ENCODE measurements at regions of chr19 and their contacts with region 1.

Region 1: GRCh38 chr19:6218491-6219162 is 61.1 kb downstream of the MLLT1 start:
- DNase-seq: peak; percentile 69 to 77 (median 72)
- H3K4me3 ChIP-seq: no peak overlapping the region
- H3K4me3 Mint-ChIP-seq: no peak overlapping the region
- H3K27ac ChIP-seq: no peak overlapping the region
- H3K27ac Mint-ChIP-seq: peak overlapping the region in 1 of 7 donors; percentile 17
- H3K4me1 ChIP-seq: no peaks in the 10 kb centered on the region
- H3K4me1 Mint-ChIP-seq: peaks cover 0 to 4% (median 2%) of the 10 kb centered on the region in 4 donors
- H3K27me3 ChIP-seq: no peaks in the 10 kb centered on the region
- H3K27me3 Mint-ChIP-seq: no peaks in the 10 kb centered on the region

Region 2: GRCh38 chr19:6238643-6239281 is 20.1 kb after region 1 on chr19:
- CTCF ChIA-PET with region 1: interaction called, 13 read pairs
- POLR2A ChIA-PET with region 1: no interaction called
- intact Hi-C with region 1: no loop called
- DNase-seq: peak in 1 of 5 donors; percentile 19
- H3K4me3 ChIP-seq: no peak overlapping the region
- H3K4me3 Mint-ChIP-seq: peak overlapping the region in 2 of 8 donors; percentile 21 to 25
- H3K27ac ChIP-seq: no peak overlapping the region
- H3K27ac Mint-ChIP-seq: peak overlapping the region in 3 of 7 donors; percentile 49 to 64 (median 55)
- H3K4me1 ChIP-seq: peaks cover 30% of the 10 kb centered on the region
- H3K4me1 Mint-ChIP-seq: peaks cover 17 to 59% (median 33%) of the 10 kb centered on the region in 4 donors
- H3K27me3 ChIP-seq: no peaks in the 10 kb centered on the region
- H3K27me3 Mint-ChIP-seq: no peaks in the 10 kb centered on the region

Region 3: DNA sequence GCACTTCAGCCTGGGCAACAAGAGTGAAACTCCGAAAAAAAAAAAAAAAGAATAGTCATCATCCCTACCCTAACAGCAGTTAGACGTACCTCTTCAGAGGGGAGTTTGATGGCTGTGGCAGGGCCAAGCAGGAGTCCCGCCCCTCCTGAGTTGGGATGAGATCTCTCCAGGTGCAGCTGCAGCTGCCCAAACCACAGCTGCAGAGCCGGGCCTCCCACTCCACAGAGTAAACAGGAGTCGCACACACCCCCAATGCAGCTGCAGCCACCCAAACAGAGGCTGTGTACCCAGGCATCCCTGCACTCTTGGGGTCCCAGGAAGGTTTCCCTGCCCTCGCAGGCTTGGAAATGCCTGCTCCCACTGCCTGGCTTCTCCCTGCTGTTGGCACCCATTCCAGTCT is 78.6 kb after region 1 on chr19:
- CTCF ChIA-PET with region 1: interaction called, 26 read pairs
- POLR2A ChIA-PET with region 1: no interaction called
- intact Hi-C with region 1: no loop called
- DNase-seq: no peak
- H3K4me3 ChIP-seq: no peak overlapping the region
- H3K4me3 Mint-ChIP-seq: no peak overlapping the region
- H3K27ac ChIP-seq: no peak overlapping the region
- H3K27ac Mint-ChIP-seq: no peak overlapping the region
- H3K4me1 ChIP-seq: no peaks in the 10 kb centered on the region
- H3K4me1 Mint-ChIP-seq: peaks cover 0 to 5% (median 2%) of the 10 kb centered on the region in 4 donors
- H3K27me3 ChIP-seq: no peaks in the 10 kb centered on the region
- H3K27me3 Mint-ChIP-seq: peaks cover 2 to 3% of the 10 kb centered on the region in 2 donors